Mucosa of descending colon (tissue), 3 donors: ENCODE measurements at regions of chr5 and their contacts with region 1.

Region 1: GRCh38 chr5:64634997-64635686 is 55.2 kb upstream of the SHISAL2B start:
- DNase-seq: no peak
- ATAC-seq: peak; percentile 46
- H3K4me3 ChIP-seq: no peak overlapping the region
- H3K4me1 ChIP-seq: no peaks in the 10 kb centered on the region
- CTCF ChIP-seq: peak; percentile 46

Region 2: GRCh38 chr5:64784451-64785025 is 149.4 kb after region 1 on chr5:
- intact Hi-C with region 1: loop called (anchors 2 to 5 kb)
- DNase-seq: peak in 2 of 3 donors; percentile 46 to 90
- ATAC-seq: peak; percentile 73
- H3K4me3 ChIP-seq: no peak overlapping the region
- H3K4me1 ChIP-seq: no peaks in the 10 kb centered on the region
- CTCF ChIP-seq: peak; percentile 56

Region 3: DNA sequence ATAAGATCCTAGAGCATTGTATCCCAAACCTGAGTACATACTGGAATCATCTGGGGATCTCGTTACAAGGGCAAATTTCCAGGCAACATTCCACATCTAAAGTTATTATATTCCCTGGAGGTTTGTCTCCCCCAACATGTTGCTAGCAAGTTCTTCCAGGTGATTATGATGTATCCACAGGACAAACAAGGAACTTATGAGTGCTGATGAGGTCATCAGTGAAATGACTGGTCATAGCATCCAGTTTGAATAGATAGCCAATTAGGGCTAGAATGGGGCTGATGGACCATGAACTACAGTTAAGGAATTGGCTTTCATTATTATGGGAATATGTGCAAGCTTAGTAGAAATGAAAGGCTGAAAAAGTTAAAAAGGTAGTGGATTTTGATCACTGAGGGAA is 248.8 kb after region 1 on chr5:
- intact Hi-C with region 1: no loop called
- DNase-seq: no peak
- ATAC-seq: no peak
- H3K4me3 ChIP-seq: no peak overlapping the region
- H3K4me1 ChIP-seq: no peaks in the 10 kb centered on the region
- CTCF ChIP-seq: no peak